Activated CD4-positive, alpha-beta memory T cell treated with anti-CD3 and anti-CD28 coated beads for 36 hours (primary cell): ENCODE measurements at regions of chr16 and their contacts with region 1.

Region 1: GRCh38 chr16:19094541-19095365 is 19.0 kb upstream of the ITPRIPL2 start:
- DNase-seq: no peak
- H3K4me3 Mint-ChIP-seq: no peak overlapping the region
- H3K27ac Mint-ChIP-seq: no peak overlapping the region
- H3K4me1 Mint-ChIP-seq: peaks cover 7% of the 10 kb centered on the region
- H3K27me3 Mint-ChIP-seq: peaks cover 3% of the 10 kb centered on the region

Region 2: DNA sequence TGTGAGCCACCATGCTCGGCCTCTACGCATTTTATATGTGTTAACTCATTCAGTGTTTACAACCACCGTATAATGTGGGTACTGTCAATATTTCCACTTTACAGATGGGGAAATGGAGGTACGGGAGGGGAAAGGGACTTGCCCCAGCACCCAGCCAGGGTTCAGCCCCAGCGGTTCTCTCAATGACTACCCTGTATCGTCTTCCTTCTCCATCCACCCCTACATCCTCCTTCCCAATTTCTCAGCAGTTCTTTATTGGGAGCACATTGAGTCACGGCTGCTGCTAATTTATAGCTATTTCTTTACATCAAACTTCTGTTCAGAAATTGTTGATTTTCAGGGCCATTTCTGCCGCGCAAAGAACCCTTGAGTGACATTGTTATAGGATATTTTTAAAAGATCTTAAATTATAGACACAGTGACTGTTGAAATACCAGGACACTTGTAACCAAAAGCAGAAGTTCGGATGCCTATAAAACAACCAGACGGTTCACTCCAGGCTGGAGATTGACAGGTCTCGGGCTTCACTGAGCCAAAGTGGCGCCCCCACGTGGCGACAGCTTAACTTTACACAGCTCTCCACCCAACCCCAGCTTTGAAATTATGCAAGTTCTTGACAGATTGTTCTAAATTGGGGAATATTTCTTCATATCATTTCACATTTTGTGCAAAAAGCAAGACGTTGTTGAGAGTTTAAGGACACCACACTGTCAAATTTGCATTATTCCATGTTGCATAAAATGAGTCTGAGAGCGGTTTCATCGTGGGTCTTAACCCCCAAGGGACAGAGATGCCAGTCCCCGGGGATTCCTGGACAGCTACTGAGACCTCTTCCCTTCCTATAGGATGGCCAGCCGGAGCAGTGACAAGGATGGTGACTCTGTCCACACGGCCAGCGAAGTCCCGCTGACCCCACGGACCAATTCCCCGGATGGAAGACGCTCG is 85.1 kb after region 1 on chr16:
- CTCF ChIA-PET with region 1: interaction called, 92 read pairs
- POLR2A ChIA-PET with region 1: no interaction called
- intact Hi-C with region 1: no loop called
- DNase-seq: peak; percentile 62
- H3K4me3 Mint-ChIP-seq: no peak overlapping the region
- H3K27ac Mint-ChIP-seq: no peak overlapping the region
- H3K4me1 Mint-ChIP-seq: no peaks in the 10 kb centered on the region
- H3K27me3 Mint-ChIP-seq: peaks cover 15% of the 10 kb centered on the region